ENCODE measurements at regions of chr19 and their contacts with region 1.

Region 1: GRCh38 chr19:3163230-3163886 is 15.2 kb upstream of the S1PR4 start:
- DNase-seq: peak; percentile 52 to 61
- ATAC-seq: peak; percentile 94

Region 2: GRCh38 chr19:2887391-2887914 is 275.9 kb before region 1 on chr19:
- intact Hi-C with region 1: loop called in 1 of 2 experiments (anchors 10 kb)
- DNase-seq: no peak
- ATAC-seq: peak; percentile 78

Region 3: DNA sequence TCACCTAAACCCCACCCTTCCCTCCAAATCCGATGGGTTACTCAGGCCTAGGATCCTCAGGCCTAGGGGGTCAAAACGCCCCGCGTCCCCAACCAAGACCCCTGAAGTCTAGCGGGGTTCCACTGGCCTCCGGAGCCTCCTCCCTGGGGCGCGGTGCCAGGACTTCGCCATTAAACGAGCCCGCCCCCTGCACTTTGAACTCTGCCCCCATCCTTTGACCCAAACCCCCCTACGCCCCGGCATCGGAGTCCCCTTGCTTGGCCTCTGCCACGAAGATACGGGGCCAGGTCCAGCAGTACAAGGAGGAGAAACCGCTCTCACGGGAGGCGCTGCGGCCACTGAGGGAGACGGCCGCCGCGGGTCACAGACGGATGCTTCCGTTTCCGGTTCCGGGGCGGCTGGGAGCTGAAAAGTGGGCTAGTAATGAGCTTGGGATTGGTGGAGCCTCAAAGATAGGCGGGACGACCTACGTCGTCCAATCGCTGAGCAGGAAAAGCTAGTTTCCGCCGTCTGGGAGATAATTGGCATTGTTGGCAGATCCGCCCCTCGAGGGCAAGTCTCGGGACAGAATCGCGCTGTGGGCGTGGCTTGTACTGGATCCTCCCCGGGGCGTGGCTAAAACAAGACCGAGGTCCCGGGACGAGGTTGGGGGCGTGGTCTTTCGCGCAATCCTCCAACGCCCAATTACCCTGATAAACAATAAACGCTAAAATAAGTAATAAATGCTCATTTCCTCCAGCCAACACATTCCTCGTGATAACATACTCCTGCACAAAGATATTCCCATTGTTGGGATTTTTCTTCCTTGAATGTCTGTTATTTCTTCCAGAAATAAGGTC is 212.9 kb before region 1 on chr19:
- intact Hi-C with region 1: loop called in 1 of 2 experiments (anchors 10 kb)
- DNase-seq: peak; percentile 100
- ATAC-seq: peak; percentile 86

Region 4: GRCh38 chr19:3365836-3366752 is 202.7 kb after region 1 on chr19 and contains the start of gene NFIC:
- intact Hi-C with region 1: no loop called
- DNase-seq: peak; percentile 68 to 81
- ATAC-seq: peak; percentile 72
- total RNA-seq, gene NFIC: 52.4 to 57.8 TPM

Measured in left colon (tissue), 2 donors.